Endothelial cell of umbilical vein (primary cell): ENCODE measurements at regions of chr11 and their contacts with region 1.

Region 1: GRCh38 chr11:119095066-119095880 is 6.4 kb downstream of the DPAGT1 start:
- DNase-seq: peak; percentile 100
- H3K4me3 ChIP-seq: peak overlapping the region; percentile 70 to 95 (median 90)
- H3K27ac ChIP-seq: peak overlapping the region; percentile 59
- H3K4me1 ChIP-seq: peaks cover 27% of the 10 kb centered on the region
- H3K27me3 ChIP-seq: no peaks in the 10 kb centered on the region
- CTCF ChIP-seq: peak in 1 of 2 donors; percentile 1
- POLR2A ChIP-seq: peak; percentile 100

Region 2: DNA sequence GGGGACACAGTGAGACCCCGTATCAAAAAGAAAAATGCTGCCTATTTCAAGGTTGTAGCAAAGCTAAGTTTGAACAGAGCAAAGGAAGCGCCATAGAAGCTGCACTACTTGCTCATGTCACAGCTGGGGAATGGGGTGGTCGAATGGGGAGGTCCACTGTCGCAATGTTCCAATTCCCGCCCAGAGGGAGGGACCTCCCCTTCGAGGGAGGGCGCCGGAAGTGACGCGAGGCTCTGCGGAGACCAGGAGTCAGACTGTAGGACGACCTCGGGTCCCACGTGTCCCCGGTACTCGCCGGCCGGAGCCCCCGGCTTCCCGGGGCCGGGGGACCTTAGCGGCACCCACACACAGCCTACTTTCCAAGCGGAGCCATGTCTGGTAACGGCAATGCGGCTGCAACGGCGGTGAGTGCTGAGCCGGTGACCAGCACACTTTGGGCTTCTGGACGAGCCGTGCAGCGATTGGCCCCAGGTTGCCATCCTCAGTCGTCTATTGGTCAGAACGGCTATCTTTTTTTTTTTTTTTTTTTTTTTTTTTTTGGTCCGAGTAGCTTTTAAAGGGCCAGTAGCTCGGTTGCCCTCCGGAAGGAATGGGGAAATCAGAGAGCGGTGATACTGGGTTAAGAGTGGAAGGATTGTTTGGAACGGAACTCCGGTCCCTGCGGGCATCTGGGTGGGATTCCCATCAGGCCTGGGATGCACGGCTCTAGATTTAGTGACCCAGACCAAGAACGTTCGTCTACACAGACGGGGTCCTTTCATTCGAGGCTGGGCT is 10.4 kb before region 1 on chr11 and contains the start of gene HMBS:
- CTCF ChIA-PET with region 1: interaction called, 16 read pairs
- POLR2A ChIA-PET with region 1: interaction called, 23 read pairs
- dilution Hi-C with region 1: no loop called
- intact Hi-C with region 1: loop called (anchors 1 kb)
- DNase-seq: peak; percentile 95
- H3K4me3 ChIP-seq: peak within 1 kb of the TSS; percentile 10 to 77 (median 70)
- H3K27ac ChIP-seq: peak within 1 kb of the TSS; percentile 49
- H3K4me1 ChIP-seq: peaks cover 12% of the 10 kb centered on the region
- H3K27me3 ChIP-seq: no peaks in the 10 kb centered on the region
- CTCF ChIP-seq: no peak
- POLR2A ChIP-seq: peak; percentile 97
- total RNA-seq, gene HMBS: 13.5 and 16.1 TPM in 2 replicates